Right cardiac atrium (tissue), 5 donors: ENCODE measurements at regions of chr17 and their contacts with region 1.

Region 1: DNA sequence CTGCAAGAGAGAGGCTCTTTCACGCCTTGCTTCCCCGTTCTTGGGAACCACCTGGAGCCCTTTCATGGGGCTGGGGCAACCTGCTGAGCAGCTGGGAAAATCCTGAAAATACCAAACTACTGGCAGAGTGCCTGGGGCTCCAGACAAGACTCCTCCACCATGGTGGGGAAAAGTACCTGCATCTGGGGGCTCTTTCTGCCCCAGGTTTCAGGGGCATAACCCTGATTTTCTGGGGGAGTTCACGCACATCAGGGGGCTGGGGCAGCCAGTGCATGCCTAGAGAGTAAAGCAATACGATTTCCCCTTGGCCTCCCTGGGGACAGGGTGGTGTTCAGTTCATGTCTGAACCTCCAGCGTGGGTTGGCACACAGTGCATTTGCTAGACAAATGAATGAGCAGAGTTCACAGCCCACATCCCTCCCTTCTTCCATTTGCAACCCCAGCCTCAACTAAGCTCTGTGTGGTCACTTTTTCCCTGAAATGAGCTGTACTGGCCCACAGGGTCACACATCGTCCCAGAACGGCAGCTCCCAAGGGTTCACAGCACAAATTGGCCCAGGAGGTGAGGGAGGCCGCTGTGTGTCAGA is 5.2 kb upstream of the CDC42EP4 start:
- DNase-seq: peak in 2 of 3 donors; percentile 72 to 77
- ATAC-seq: peak; percentile 40 to 41
- H3K4me3 ChIP-seq: no peak overlapping the region
- H3K27ac ChIP-seq: no peak overlapping the region
- H3K4me1 ChIP-seq: peaks cover 8% of the 10 kb centered on the region
- H3K27me3 ChIP-seq: no peaks in the 10 kb centered on the region

Region 2: GRCh38 chr17:73091770-73092522 is 225.1 kb before region 1 on chr17:
- intact Hi-C with region 1: no loop called
- DNase-seq: peak in 2 of 3 donors; percentile 61 to 73
- ATAC-seq: peak; percentile 33 to 55
- H3K4me3 ChIP-seq: peak overlapping the region; percentile 82
- H3K27ac ChIP-seq: peak overlapping the region; percentile 33
- H3K4me1 ChIP-seq: peaks cover 3% of the 10 kb centered on the region
- H3K27me3 ChIP-seq: no peaks in the 10 kb centered on the region

Region 3: GRCh38 chr17:73281928-73282327 is 35.1 kb before region 1 on chr17:
- intact Hi-C with region 1: loop called in 1 of 4 experiments (anchors 5 kb)
- DNase-seq: peak in 1 of 3 donors; percentile 30
- ATAC-seq: no peak
- H3K4me3 ChIP-seq: no peak overlapping the region
- H3K27ac ChIP-seq: no peak overlapping the region
- H3K4me1 ChIP-seq: peaks cover 21% of the 10 kb centered on the region
- H3K27me3 ChIP-seq: no peaks in the 10 kb centered on the region